MCF 10A (cell line): ENCODE measurements at regions of chr3 and their contacts with region 1.

Region 1: DNA sequence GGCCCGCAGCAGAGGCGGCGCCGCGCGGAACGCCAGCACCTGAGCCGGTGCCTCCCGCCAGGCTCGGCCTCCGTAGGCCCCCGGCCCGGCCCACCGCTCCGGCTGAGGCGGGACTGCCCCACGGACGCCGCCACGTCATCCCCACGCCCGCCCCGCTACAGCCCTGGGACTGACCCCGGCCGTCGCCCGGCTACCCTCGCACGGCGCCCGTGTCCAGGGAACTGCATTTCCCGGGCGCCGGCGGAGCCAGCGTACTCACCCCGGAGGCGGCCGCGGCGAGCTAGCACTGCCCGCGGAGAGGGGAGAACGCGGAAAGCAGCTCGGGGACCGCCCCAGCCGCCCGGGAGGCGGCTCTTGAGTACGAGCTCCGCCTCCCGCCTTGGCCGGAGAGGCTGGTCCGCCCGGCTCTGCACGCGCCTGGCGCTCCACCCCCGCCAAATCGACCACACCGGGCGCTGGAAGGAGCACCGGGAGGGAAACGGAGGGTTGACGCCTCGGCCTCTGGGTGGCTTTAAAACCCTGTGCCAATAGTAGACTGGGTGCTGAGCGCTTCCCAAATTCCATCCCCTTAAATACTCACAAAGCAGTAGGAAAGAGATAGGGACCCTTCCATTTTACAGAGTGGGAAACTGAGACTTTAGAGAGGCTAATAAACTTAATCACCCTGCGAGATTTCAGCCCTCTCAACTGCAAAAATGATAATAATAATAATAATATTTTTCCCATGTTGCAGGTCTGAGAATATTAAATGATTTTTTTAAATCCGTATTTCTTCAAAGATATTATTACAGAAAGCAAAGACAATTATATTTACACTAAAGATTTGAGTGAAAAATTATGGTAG is at the start of gene B4GALT4:
- DNase-seq: peak; percentile 89
- H3K4me3 Mint-ChIP-seq: peak within 1 kb of the TSS; percentile 77
- H3K27ac Mint-ChIP-seq: peak within 1 kb of the TSS; percentile 87
- H3K4me1 Mint-ChIP-seq: peaks cover 6% of the 10 kb centered on the region
- H3K27me3 Mint-ChIP-seq: no peaks in the 10 kb centered on the region
- CTCF ChIP-seq: no peak
- total RNA-seq, gene B4GALT4: 18.3 and 20.4 TPM in 2 replicates

Region 2: DNA sequence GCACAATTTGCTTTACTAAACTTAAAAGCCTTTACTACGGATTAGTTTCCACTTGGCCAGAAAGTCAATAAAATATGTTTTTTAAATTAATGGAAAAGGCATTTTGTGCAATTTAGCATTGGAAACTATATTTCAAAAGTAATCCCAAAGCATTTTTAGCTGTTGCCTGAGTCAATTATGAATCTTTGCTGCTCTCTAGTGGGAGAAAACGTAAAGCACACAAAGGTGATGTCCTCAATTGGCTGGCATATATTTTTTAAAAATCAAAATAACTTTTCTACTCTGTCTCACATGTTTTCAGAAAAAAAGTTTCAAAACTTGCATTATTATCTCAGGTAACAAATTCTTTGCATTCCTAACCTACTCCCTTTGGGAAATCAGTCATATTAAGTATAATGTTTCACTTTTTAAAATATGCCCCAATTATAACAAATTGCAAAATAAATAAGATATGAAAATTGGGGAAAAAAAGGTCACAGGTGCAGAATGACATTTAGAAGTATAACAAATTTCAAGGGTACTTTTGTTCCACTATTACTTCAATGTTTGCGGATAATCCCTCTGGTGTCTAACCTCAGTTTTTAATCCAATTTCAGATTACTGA is 142.1 kb before region 1 on chr3:
- CTCF ChIA-PET with region 1: interaction called, 7 read pairs
- POLR2A ChIA-PET with region 1: interaction called, 3 read pairs
- intact Hi-C with region 1: loop called (anchors 1 kb)
- DNase-seq: peak; percentile 56
- H3K4me3 Mint-ChIP-seq: no peak overlapping the region
- H3K27ac Mint-ChIP-seq: no peak overlapping the region
- H3K4me1 Mint-ChIP-seq: peaks cover 10% of the 10 kb centered on the region
- H3K27me3 Mint-ChIP-seq: no peaks in the 10 kb centered on the region
- CTCF ChIP-seq: peak; percentile 85

Region 3: DNA sequence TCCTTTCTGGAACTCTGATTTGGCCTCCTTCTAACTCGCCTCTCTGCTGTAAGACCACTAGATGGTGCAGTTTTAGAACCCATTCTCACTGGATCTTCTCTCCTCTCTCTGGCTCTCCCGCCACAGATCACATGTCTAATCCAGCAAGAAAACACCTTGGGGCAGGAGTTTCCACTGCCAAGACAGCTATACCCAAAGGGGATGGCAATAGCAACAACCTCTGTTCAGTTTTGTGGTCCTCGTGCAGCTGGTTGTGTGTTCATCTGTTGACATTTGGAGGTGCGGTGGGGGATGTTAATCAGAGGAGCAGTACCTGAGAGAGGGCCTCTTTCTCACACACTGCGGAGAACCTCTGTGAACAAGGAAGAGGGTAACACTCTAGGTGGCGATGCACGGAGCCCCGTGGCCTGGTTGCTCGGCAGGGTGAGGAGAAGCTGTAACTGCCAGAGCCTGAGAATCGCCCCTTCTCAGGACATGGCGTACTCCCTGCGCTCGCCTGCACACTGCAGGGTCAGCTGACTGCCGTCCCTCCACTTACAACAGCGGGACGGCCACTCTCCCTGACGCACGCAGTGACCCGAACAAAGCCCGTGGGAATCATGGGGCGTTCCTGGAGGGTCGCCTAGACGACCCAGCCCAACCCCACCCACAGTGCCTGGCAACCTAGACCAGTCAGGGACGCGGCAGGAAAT is 95.2 kb before region 1 on chr3 and contains the start of gene TEX55:
- CTCF ChIA-PET with region 1: interaction called, 118 read pairs
- POLR2A ChIA-PET with region 1: interaction called, 24 read pairs
- intact Hi-C with region 1: loop called (anchors 1 kb)
- DNase-seq: peak; percentile 62
- H3K4me3 Mint-ChIP-seq: no peak within 1 kb of the TSS
- H3K27ac Mint-ChIP-seq: no peak within 1 kb of the TSS
- H3K4me1 Mint-ChIP-seq: peaks cover 14% of the 10 kb centered on the region
- H3K27me3 Mint-ChIP-seq: no peaks in the 10 kb centered on the region
- CTCF ChIP-seq: peak; percentile 58
- total RNA-seq, gene TEX55: not detected in 2 replicates

Region 4: DNA sequence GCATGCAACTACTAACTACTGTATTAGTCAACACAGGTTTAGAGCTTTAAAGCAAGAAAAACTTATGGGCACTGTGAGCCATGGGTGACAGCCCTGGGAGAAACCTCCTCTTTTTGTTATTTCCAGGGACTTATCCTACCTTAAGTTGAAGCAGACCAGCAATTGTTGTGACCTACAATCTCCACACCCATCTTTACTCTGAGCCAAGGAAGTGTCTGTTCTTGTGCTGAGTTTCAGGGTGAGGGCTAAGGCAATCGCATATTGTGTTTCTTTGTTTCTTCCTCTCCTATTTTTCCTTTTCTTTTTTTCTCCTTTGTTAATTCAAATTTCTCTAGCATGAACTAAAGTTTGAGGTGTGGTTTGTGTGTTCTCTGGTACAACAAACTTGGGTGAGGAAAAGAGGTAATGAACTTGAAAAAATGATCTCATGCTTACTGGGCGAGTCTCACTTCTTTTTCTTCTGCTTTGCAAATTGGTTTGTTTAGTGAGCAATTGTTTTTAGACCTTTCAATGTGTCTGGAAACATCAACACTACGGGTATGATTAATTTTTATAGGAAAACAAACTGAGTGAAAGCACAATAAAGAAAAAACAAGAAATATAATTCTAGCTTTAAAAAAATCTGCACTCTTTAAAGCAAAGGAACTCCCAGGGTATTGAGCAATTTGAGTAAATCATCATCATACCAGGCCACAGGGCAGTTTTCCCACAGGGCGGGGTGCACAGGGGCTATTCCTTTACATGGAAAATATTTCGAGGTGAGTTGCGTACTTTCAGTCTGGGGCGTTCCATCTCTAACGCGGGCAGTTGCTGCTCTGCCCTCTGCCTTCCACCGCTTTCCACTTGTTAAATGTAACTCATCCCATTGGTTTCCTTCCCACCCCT is 64.7 kb before region 1 on chr3:
- CTCF ChIA-PET with region 1: interaction called, 8 read pairs
- POLR2A ChIA-PET with region 1: interaction called, 22 read pairs
- intact Hi-C with region 1: loop called (anchors 2 kb)
- DNase-seq: peak; percentile 83
- H3K4me3 Mint-ChIP-seq: peak overlapping the region; percentile 59
- H3K27ac Mint-ChIP-seq: peak overlapping the region; percentile 94
- H3K4me1 Mint-ChIP-seq: peaks cover 28% of the 10 kb centered on the region
- H3K27me3 Mint-ChIP-seq: no peaks in the 10 kb centered on the region
- CTCF ChIP-seq: no peak

Region 5: DNA sequence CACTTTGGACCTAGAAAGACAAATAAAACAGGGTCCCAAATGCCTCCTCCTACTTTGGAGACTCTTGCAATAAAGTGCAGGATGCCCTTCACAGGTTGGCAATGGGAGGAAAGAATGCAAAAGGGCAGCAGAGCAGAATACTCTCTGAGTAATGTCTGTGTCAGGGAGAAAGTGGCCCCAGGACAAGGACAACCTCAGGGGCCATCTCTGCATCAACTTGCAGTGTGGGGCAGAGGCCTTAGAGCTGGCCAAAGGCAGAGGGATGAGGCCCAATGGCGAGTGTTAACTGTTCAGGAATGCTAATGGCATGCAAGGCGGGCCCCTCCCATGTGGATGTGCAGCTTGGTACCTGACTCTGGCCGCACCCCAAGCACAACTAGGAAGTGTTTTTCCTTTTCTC is 59.0 kb before region 1 on chr3:
- CTCF ChIA-PET with region 1: interaction called, 10 read pairs
- POLR2A ChIA-PET with region 1: interaction called, 22 read pairs
- intact Hi-C with region 1: loop called (anchors 2 kb)
- DNase-seq: peak; percentile 38
- H3K4me3 Mint-ChIP-seq: no peak overlapping the region
- H3K27ac Mint-ChIP-seq: no peak overlapping the region
- H3K4me1 Mint-ChIP-seq: peaks cover 40% of the 10 kb centered on the region
- H3K27me3 Mint-ChIP-seq: no peaks in the 10 kb centered on the region
- CTCF ChIP-seq: no peak

Region 6: GRCh38 chr3:119206611-119207511 is 34.0 kb before region 1 on chr3:
- CTCF ChIA-PET with region 1: interaction called, 10 read pairs
- POLR2A ChIA-PET with region 1: interaction called, 9 read pairs
- intact Hi-C with region 1: no loop called
- DNase-seq: peak; percentile 72
- H3K4me3 Mint-ChIP-seq: no peak overlapping the region
- H3K27ac Mint-ChIP-seq: peak overlapping the region; percentile 72
- H3K4me1 Mint-ChIP-seq: peaks cover 22% of the 10 kb centered on the region
- H3K27me3 Mint-ChIP-seq: no peaks in the 10 kb centered on the region
- CTCF ChIP-seq: no peak

Region 7: GRCh38 chr3:119293871-119294695 is 53.3 kb after region 1 on chr3 and contains the start of gene ARHGAP31:
- CTCF ChIA-PET with region 1: interaction called, 8 read pairs
- POLR2A ChIA-PET with region 1: interaction called, 14 read pairs
- intact Hi-C with region 1: no loop called
- DNase-seq: peak; percentile 51
- H3K4me3 Mint-ChIP-seq: peak within 1 kb of the TSS; percentile 81
- H3K27ac Mint-ChIP-seq: peak within 1 kb of the TSS; percentile 63
- H3K4me1 Mint-ChIP-seq: peaks cover 13% of the 10 kb centered on the region
- H3K27me3 Mint-ChIP-seq: no peaks in the 10 kb centered on the region
- CTCF ChIP-seq: no peak
- total RNA-seq, gene ARHGAP31: 4.4 and 4.7 TPM in 2 replicates

Region 8: DNA sequence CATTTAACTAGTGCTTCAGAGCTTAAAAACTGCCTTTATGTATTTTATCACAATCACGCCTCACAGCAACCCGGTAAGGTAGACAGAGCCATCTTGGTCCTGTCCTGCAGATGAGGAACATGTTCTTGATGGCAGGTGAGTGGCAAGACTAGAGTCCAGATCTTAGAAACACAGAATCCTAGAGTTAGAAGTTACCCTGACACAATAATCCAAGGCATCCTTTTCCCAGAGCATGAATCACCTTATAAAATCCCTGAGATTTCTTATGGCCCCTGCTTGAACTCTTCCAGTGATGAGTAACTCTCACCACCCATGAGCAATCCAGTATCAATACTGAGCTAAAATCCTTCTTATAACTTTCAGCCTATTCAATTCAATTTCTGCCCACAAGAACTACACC is 402.7 kb after region 1 on chr3:
- CTCF ChIA-PET with region 1: no interaction called
- POLR2A ChIA-PET with region 1: no interaction called
- intact Hi-C with region 1: no loop called
- DNase-seq: peak; percentile 38
- H3K4me3 Mint-ChIP-seq: no peak overlapping the region
- H3K27ac Mint-ChIP-seq: no peak overlapping the region
- H3K4me1 Mint-ChIP-seq: peaks cover 19% of the 10 kb centered on the region
- H3K27me3 Mint-ChIP-seq: no peaks in the 10 kb centered on the region
- CTCF ChIP-seq: no peak